ENCODE measurements at regions of chr1 and their contacts with region 1.

Region 1: GRCh38 chr1:193462629-193463320 is 276.4 kb upstream of the B3GALT2 start:
- DNase-seq: no peak
- H3K4me3 Mint-ChIP-seq: peak overlapping the region; percentile 49
- H3K27ac Mint-ChIP-seq: peak overlapping the region; percentile 78
- H3K4me1 Mint-ChIP-seq: peaks cover 50% of the 10 kb centered on the region
- H3K27me3 Mint-ChIP-seq: no peaks in the 10 kb centered on the region

Region 2: DNA sequence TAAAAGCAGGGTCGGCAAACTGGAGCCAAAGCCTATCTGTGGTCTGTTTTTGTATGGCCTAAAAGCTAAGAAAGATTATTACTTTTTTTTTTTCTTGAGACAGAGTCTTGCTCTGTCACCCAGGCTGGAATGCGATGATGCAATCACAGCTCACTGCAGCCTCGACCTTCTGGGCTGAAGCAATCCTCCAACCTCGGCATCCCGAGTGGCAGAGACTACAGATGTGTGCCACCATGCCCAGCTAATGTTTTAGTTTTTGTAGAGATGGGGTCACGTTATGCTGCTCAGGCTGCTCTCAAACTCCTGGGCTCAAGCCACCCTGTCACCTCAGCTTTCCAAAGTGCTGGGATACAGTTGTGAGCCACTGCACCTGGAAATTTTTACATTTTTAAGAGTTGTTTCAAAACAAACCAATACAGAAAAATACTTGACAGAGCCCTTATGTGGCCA is 351.1 kb before region 1 on chr1:
- CTCF ChIA-PET with region 1: no interaction called
- POLR2A ChIA-PET with region 1: no interaction called
- DNase-seq: no peak
- H3K4me3 Mint-ChIP-seq: no peak overlapping the region
- H3K27ac Mint-ChIP-seq: no peak overlapping the region
- H3K4me1 Mint-ChIP-seq: no peaks in the 10 kb centered on the region
- H3K27me3 Mint-ChIP-seq: no peaks in the 10 kb centered on the region

Region 3: GRCh38 chr1:193473932-193474331 is 11.2 kb after region 1 on chr1:
- CTCF ChIA-PET with region 1: interaction called, 9 read pairs
- POLR2A ChIA-PET with region 1: interaction called, 144 read pairs
- DNase-seq: no peak
- H3K4me3 Mint-ChIP-seq: no peak overlapping the region
- H3K27ac Mint-ChIP-seq: no peak overlapping the region
- H3K4me1 Mint-ChIP-seq: peaks cover 53% of the 10 kb centered on the region
- H3K27me3 Mint-ChIP-seq: no peaks in the 10 kb centered on the region